Tibial artery (tissue), 4 donors: ENCODE measurements at regions of chr3 and their contacts with region 1.

Region 1: GRCh38 chr3:42780892-42781700 is 8.0 kb upstream of the CCDC13 start:
- DNase-seq: no peak
- H3K4me3 ChIP-seq: no peak overlapping the region
- H3K27ac ChIP-seq: peak overlapping the region; percentile 52 to 56
- H3K4me1 ChIP-seq: peaks cover 0 to 26% (median 12%) of the 10 kb centered on the region in 4 donors
- H3K27me3 ChIP-seq: no peaks in the 10 kb centered on the region
- CTCF ChIP-seq: peak; percentile 76 to 91

Region 2: GRCh38 chr3:41502023-41502422 is 1279.1 kb before region 1 on chr3:
- intact Hi-C with region 1: no loop called
- DNase-seq: no peak
- H3K4me3 ChIP-seq: no peak overlapping the region
- H3K27ac ChIP-seq: no peak overlapping the region
- H3K4me1 ChIP-seq: peaks cover 0 to 4% (median 0%) of the 10 kb centered on the region in 4 donors
- H3K27me3 ChIP-seq: no peaks in the 10 kb centered on the region
- CTCF ChIP-seq: no peak

Region 3: DNA sequence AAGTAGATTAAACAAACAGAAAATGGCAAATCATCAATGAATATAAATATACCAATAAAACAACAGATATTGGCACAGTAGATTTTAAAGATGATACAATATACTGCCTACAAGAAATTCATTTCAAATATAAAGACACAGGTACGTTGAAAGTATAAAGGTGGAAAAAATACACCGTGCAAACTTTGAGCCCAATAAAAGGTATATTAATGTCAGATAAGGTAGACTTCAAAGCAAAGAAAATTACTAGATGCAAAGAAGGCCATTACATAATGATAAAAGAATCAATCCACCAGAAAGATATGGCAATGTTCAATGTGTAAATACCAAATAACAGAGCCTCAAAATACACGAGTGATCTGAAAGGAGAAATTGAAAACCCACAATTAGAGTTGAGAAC is 313.0 kb before region 1 on chr3:
- intact Hi-C with region 1: no loop called
- DNase-seq: no peak
- H3K4me3 ChIP-seq: no peak overlapping the region
- H3K27ac ChIP-seq: no peak overlapping the region
- H3K4me1 ChIP-seq: peaks cover 0 to 2% (median 0%) of the 10 kb centered on the region in 4 donors
- H3K27me3 ChIP-seq: no peaks in the 10 kb centered on the region
- CTCF ChIP-seq: no peak

Region 4: DNA sequence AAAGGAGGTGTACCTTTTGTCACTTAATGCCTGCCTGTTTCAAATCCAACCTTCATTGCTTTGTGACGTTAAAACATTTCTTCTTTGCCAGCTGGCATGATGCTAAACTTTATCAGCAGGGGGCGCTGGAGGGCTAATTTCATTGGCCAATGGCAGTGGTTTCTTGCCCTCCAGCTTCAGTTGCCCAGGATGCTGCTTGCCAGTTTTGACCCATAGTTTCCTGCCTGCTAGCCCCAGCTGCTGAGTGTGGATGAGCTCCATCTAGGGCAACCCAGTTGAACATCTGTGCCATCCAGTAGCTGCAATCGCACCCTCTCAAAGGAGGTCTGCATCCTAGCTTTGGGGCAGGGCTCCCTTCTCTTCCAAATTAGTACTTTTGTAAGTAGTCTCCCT is 50.2 kb after region 1 on chr3:
- intact Hi-C with region 1: loop called (anchors 5 kb)
- DNase-seq: peak; percentile 72 to 84
- H3K4me3 ChIP-seq: no peak overlapping the region
- H3K27ac ChIP-seq: peak overlapping the region in 1 of 2 donors; percentile 19
- H3K4me1 ChIP-seq: peaks cover 0 to 10% (median 2%) of the 10 kb centered on the region in 4 donors
- H3K27me3 ChIP-seq: no peaks in the 10 kb centered on the region
- CTCF ChIP-seq: peak; percentile 78 to 89

Region 5: DNA sequence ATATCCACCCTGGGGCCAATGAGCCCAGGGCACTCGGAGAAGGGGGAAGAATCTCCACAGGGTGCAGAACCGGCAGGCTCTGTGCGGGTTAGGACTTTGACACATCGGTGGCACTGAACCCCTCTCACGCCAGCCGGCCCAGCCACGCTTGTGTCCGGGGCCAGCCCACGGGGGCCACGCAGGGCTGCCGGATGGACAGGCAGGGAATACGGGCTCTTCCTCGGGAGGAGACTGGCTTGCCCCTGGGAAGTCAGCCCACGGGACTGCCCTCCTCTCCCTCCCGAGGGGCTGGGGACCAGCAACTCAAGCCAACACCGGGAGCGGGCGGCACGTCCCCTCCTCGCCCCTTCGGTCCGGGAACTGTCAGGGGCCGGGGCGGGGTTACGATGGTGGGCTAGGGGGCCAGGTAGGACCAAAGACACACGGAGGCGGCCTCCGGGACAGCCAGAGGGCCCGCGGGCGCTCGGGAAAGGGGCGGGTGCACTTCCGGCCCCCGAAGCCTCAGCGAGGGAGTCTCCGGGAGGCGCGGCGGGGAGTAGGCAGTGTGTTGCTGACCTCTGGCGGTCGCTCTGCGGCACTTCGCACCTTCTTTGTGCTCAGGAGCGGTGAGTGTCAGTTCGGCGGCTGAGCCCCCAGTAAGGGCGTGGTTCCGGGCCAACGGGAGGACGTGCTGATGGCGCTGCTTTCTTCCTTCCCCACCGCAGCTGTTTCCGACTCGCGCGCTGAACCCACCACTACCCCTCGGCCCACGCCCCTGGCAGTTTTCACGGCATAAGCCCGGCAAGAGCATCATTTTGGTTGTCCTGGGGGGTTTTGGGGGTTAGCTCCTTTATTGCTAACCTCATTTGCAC is 99.7 kb after region 1 on chr3:
- intact Hi-C with region 1: loop called (anchors 2 kb)
- DNase-seq: peak; percentile 84 to 91
- H3K4me3 ChIP-seq: peak overlapping the region; percentile 65 to 66
- H3K27ac ChIP-seq: peak overlapping the region; percentile 77 to 84
- H3K4me1 ChIP-seq: peaks cover 0 to 11% (median 5%) of the 10 kb centered on the region in 4 donors
- H3K27me3 ChIP-seq: no peaks in the 10 kb centered on the region
- CTCF ChIP-seq: peak; percentile 95 to 96